ENCODE measurements at regions of chr1 and their contacts with region 1.

Region 1: GRCh38 chr1:6245086-6245868 is 1.3 kb downstream of the HES3 start:
- H3K4me3 ChIP-seq: peak overlapping the region; percentile 20
- H3K27ac ChIP-seq: no peak overlapping the region
- H3K4me1 ChIP-seq: no peaks in the 10 kb centered on the region; the same call in 1 of the 2 replicates
- CTCF ChIP-seq: peak; percentile 91

Region 2: DNA sequence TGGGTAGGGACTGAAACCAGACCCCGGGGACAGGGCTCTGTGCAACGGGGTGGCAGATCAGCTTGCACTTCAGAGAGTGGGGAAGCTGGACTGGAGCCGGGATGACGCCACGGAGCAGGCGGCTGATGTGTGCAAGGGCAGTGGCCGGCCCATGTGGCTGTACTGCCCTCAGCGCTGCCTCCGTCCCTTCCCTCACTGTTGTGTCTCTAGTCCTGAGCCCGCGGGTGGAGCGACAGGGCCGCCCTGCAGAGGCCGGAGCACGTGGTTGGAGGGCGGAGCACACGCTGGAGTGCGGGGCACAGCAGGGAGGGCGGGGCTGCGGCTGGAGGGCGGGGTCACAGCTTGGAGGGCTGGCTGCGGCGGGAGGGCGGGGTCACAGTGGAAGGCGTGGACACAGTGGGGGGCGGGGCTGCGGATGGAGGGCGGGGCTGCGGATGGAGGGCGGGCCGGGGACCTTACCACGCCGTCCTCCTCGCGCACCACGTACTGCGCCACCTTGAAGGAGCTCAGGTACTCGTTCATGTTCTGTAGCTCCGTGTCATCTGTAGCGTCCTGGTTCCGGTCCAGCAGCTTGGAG is 117.6 kb before region 1 on chr1:
- CTCF ChIA-PET with region 1: no interaction called
- POLR2A ChIA-PET with region 1: no interaction called
- H3K4me3 ChIP-seq: no peak overlapping the region
- H3K27ac ChIP-seq: no peak overlapping the region
- H3K4me1 ChIP-seq: no peaks in the 10 kb centered on the region
- CTCF ChIP-seq: no peak

Region 3: DNA sequence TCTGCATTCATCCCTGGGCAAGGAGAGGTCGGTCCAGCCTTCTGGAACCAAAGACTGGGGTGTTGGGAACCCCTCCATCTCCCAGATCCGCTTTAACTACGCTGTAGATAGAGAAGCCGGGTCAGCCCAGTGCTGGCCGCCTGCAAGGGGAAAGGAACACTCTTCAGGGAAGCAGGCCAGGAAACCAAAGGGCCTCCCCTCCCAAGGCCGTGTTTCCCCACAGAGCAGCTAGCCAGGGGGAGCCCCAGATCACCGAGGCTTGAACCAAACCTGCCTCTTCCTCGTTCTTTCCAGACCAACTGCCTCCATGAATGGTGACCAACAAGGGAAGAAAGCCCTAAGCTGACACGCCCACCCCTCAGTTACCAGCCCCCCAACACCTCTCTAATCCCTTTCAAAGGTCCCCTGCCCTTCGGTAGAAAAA is 63.9 kb before region 1 on chr1:
- CTCF ChIA-PET with region 1: no interaction called
- POLR2A ChIA-PET with region 1: no interaction called
- H3K4me3 ChIP-seq: no peak overlapping the region
- H3K27ac ChIP-seq: no peak overlapping the region
- H3K4me1 ChIP-seq: no peaks in the 10 kb centered on the region
- CTCF ChIP-seq: no peak

Region 4: DNA sequence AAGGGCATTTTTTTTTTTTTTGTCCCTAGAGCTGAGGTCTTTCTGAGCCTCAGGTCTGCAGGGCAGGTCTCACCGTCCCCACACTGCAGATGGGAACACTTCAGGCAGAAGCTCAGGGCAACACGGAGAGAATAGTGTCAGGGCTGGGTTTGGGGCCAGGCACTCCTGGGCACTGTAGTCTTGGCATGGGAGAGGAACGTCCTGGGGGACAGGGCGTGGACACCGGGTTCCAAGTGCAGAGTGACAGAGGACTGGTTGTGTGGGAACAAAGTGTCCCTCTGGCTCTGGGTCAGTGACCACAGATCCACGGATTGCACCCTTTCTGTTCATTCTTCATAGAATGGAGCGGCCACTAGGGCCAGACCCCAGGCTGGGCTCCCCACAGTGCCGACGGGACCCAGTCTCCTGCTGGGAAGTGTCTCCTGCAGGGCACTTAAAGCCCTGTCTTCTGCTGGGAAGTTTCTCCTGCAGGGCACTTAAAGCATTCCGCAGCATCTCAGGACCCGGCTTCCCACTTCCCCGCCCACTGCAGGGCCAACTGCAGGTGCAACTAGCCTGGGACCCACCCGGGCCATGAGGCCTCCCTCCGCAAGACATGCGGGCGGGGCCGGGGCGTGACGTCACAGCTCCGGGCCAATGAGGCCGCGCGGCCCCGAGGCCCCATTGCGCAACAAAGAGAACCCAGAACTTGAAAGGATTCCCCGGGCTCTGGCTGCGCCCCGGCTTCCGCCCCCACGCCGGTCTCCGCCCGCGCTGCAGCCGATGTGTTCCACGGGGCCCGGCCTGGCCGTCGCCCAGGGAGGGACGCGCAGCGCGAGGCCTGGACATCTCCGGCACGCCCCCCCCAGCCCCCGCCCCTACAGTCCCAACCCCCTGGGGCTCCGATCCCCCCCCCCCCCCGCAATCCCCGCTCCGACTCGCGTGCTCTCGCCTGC is 14.5 kb after region 1 on chr1:
- CTCF ChIA-PET with region 1: interaction called, 23 read pairs
- POLR2A ChIA-PET with region 1: no interaction called
- H3K4me3 ChIP-seq: peak overlapping the region; percentile 46
- H3K27ac ChIP-seq: no peak overlapping the region
- H3K4me1 ChIP-seq: 0 out of 2 replicates have a peak, but pooled peaks cover 2% of the 10 kb centered on the region
- CTCF ChIP-seq: no peak

Region 5: GRCh38 chr1:6343506-6344405 is 98.5 kb after region 1 on chr1:
- CTCF ChIA-PET with region 1: interaction called, 181 read pairs
- POLR2A ChIA-PET with region 1: interaction called, 3 read pairs
- H3K4me3 ChIP-seq: no peak overlapping the region
- H3K27ac ChIP-seq: no peak overlapping the region
- H3K4me1 ChIP-seq: no peaks in the 10 kb centered on the region
- CTCF ChIP-seq: peak; percentile 93

Region 6: GRCh38 chr1:6393400-6394187 is 148.3 kb after region 1 on chr1 and contains the start of gene ACOT7:
- CTCF ChIA-PET with region 1: interaction called, 68 read pairs
- POLR2A ChIA-PET with region 1: no interaction called
- H3K4me3 ChIP-seq: peak within 1 kb of the TSS; percentile 75
- H3K27ac ChIP-seq: peak within 1 kb of the TSS; percentile 90
- H3K4me1 ChIP-seq: peaks cover 8% of the 10 kb centered on the region; the same call in 1 of the 2 replicates
- CTCF ChIP-seq: peak; percentile 39

Region 7: GRCh38 chr1:6409053-6409452 is 163.8 kb after region 1 on chr1:
- CTCF ChIA-PET with region 1: interaction called, 68 read pairs
- POLR2A ChIA-PET with region 1: no interaction called
- H3K4me3 ChIP-seq: no peak overlapping the region
- H3K27ac ChIP-seq: no peak overlapping the region
- H3K4me1 ChIP-seq: no peaks in the 10 kb centered on the region
- CTCF ChIP-seq: no peak

Region 8: DNA sequence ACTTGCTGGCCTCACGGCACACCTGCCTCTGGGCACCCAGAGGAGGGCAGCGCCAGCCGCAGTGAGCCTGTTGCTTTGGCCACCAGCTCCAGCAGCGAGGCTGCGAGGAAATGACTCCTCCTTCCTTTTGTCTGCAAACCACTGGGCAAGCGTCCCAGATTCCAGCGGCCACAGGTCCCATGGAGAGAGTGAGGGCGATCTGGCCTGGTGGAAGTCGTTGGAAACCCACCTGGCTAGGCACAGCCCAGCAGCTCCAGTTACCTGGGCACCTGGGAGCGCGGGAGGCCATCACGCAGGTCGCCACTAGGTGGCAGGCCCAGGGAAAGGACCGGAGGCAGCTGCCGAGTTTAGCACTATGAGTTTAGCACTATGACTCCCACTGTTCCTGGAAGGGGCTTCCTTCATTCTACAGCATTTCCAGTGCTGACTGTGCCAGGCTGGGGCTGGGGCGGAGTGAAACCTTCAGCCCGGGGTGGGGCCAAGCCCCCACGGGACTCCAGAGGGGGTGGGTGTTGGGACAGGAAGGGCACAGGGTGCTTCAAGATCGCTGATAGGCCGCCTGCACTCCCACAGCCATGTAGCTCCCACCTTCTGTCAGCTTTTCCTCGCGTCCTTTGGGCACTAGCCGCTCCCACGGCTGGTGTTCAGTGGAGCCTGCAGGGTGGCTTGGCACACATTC is 178.2 kb after region 1 on chr1:
- CTCF ChIA-PET with region 1: interaction called, 15 read pairs
- POLR2A ChIA-PET with region 1: interaction called, 3 read pairs
- H3K4me3 ChIP-seq: no peak overlapping the region
- H3K27ac ChIP-seq: no peak overlapping the region
- H3K4me1 ChIP-seq: no peaks in the 10 kb centered on the region; the same call in 1 of the 2 replicates
- CTCF ChIP-seq: peak; percentile 89

Measured in HEK293 (cell line).